ENCODE measurements at regions of chr17 and their contacts with region 1.

Region 1: DNA sequence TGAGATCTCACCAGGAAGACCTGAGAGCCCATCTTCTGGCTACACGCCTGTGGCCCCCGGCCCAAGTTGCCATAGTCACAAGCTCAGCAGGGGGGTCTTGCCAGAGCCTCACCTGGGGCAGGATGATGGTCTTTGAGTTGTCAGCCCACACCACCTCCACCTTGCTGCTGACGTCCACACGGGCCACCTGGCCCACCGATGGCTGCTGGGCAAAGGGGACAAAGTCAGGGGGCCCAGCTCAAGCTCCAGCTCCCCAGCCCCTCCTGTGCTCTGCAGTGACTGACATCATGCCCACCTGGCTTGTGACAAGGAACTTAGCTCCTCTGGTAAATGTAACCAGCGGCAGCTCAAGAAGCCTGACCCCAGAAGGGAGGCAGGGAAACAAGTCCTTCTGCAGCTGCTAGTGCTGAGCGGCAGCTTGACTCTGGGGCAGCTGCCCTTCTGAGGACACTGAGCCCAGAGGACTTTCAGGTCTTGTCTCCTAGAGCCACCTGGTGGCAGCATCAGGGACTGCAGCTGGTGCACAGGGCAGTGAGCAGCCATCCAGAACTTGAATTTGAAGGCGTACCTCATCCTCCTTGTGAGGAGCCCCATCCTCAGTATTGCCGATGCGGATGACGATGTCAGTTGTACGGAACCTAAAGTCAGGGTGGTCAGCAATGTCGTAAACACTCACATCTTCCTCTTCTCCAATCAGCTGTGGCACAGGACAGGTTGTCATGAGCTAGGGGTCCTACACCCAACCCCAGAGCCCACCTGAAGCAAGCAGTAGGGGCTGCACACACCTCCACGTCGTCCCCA is 13.5 kb downstream of the SPHK1 start:
- DNase-seq: peak; percentile 89
- CTCF ChIP-seq: peak; percentile 96

Region 2: DNA sequence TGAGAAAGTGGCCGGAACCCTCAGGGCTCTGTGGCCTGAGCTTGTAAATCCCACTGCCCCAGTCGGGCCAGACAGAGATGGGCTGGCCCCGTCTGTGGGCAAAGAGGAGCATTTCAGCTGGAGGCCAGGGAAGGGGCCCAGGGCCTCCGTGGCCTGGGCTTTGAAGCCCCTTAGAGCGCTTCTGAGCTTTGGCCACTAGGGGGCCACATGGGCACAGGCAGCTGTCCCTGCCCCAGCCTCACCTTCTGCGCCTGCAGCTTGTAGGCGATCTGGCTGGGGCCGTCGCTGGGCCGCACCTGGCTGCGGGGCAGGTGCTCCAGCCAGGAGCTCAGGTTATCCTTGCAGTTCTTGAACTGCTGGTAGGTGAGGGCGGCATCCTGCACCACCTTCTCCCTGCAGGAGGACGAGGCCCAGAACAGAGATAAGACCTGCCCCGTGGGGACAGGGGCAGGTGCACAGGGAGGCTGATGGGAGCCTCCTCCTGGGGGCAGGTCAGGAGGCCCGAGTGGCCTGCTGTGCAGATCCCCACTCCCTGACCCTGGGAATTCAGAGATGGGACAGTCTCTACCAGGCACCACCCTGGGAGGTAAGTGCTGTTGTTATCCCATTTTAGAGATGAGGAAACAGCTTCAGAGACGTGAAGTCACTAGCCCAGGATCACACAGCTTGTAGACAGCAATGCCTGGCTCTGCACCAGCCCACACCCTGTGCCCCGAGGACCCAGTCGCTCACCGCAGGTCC is 383.5 kb before region 1 on chr17:
- CTCF ChIA-PET with region 1: interaction called, 11 read pairs
- POLR2A ChIA-PET with region 1: no interaction called
- DNase-seq: peak; percentile 93
- CTCF ChIP-seq: peak; percentile 99

Region 3: GRCh38 chr17:76307299-76307965 is 90.5 kb before region 1 on chr17:
- CTCF ChIA-PET with region 1: interaction called, 203 read pairs
- POLR2A ChIA-PET with region 1: no interaction called
- DNase-seq: no peak
- CTCF ChIP-seq: no peak

Region 4: GRCh38 chr17:76365256-76365903 is 32.5 kb before region 1 on chr17:
- CTCF ChIA-PET with region 1: interaction called, 24 read pairs
- POLR2A ChIA-PET with region 1: no interaction called
- DNase-seq: no peak
- CTCF ChIP-seq: peak; percentile 53

Region 5: GRCh38 chr17:76384222-76384986 is 13.5 kb before region 1 on chr17 and contains the start of gene SPHK1:
- CTCF ChIA-PET with region 1: interaction called, 109 read pairs
- POLR2A ChIA-PET with region 1: no interaction called
- DNase-seq: peak; percentile 90
- CTCF ChIP-seq: no peak

Region 6: GRCh38 chr17:76427501-76428231 is 29.8 kb after region 1 on chr17:
- CTCF ChIA-PET with region 1: interaction called, 10 read pairs
- POLR2A ChIA-PET with region 1: no interaction called
- DNase-seq: no peak
- CTCF ChIP-seq: no peak

Region 7: DNA sequence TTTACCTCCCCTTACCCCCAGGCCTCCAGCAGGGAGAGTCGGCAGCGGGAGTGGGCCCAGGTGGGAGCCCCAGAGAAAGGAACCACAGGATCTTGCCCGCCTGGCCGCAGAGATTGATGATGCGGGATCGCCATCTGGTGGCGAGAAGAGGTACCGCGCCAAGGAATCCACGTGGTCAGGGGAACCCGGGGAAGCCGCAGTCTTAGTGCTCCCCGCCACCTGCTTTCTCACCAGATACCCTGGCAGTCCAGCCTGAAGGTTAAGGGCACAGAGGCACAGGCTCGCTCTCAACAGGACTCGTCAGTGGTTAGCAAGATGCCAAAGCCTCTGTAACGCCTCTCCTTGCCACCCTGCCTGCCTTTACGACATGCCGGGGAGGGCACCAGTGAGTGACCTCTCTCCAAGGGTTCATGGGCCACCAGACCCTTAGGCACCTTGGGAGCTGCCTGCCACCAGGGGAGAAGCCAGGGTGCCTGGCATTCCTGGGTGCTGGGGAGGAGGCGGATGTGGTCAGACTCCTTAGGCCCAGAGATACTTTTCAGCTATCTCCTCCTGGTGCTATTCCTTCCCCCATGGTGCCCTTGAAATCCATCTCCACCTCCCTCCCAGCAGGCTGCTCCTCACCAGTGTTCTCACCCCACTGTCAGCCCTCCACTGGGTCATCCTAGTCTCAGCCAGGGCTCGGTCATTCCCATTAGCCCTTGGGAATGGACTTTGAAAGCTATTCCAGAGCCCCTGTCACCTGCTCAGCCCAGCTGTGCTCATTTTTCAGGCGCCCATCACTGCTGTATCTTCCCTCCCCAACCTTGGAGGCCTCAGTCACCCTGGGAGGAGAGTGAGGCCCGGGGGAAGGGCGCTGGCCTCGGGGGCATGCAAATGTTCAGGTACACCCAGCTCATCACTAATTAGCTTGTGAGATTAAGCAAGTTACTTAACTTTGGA is 108.8 kb after region 1 on chr17:
- CTCF ChIA-PET with region 1: interaction called, 19 read pairs
- POLR2A ChIA-PET with region 1: no interaction called
- DNase-seq: peak; percentile 88
- CTCF ChIP-seq: peak; percentile 89